Aorta (tissue), 5 donors: ENCODE measurements at regions of chr6 and their contacts with region 1.

Region 1: DNA sequence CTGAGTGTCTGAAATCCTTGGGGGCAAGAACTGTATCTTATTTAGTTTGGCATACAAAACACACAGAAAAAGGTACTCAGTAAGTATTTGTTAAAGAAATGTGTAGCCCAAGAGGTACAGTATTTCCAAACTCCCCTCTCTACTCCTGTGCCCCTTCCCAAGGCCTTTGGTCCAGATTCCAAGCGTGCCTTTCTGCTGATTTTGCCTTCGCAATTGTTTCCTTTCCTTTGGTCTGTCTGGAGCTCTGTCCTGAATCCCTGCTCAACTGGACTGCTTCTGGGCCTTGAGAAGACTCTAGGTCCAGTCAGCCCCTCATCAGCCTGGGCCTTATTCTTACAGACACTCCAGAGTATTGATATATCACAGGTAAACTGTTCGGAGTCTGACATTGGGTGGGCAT is 122.2 kb upstream of the SYNCRIP start:
- DNase-seq: no peak
- ATAC-seq: peak; percentile 59
- H3K4me3 ChIP-seq: no peak overlapping the region
- H3K27ac ChIP-seq: peak overlapping the region; percentile 86 to 89
- H3K4me1 ChIP-seq: peaks cover 0 to 3% of the 10 kb centered on the region in 2 donors
- H3K27me3 ChIP-seq: no peaks in the 10 kb centered on the region

Region 2: GRCh38 chr6:85690071-85690470 is 74.8 kb before region 1 on chr6:
- intact Hi-C with region 1: no loop called
- DNase-seq: no peak
- ATAC-seq: no peak
- H3K4me3 ChIP-seq: no peak overlapping the region
- H3K27ac ChIP-seq: no peak overlapping the region
- H3K4me1 ChIP-seq: no peaks in the 10 kb centered on the region
- H3K27me3 ChIP-seq: no peaks in the 10 kb centered on the region

Region 3: DNA sequence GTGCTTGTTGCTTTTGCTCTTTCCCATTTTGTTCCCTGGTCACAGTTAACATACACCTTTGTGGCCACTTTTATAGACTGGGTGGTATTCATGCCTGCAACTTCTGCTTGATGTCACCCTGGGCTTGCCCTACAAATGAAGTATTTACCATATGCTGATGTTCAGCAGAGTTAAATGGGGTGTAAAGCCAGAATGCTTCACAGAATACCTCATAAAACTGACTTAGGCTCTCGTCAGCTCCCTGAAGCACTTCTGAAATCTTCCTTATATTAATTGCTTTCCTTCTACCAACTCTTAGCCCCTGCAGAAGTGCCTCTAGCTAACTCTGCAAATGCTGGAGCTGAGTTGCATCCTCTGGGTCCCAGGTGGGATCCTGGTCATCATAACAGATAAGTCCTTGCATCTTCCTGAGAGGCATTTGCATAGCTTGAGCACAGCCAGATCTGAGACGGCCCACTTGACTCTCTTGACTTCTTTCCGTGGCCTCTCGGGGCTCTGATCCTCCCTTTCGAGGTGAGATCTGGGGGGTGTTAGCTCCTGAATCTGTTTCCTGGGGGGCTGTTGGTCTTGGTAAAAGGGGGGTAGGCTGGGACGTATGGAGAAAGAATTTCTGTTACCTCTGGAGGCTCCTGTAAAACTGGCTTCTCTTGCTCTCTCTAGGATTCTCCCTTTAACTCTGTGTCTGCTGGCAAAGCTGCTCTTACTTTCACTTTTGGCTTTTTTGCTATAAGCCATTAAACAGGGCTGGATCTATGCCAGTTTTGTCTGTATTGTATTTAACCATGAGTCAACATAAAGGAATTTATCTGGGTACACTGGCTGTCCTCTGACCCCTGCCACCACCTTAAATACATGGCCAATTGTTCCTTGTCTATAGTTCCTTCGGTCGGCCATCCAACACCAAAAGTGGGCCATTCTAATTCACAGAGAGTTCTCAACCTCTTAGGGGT is 100.9 kb after region 1 on chr6:
- intact Hi-C with region 1: loop called in 1 of 2 experiments (anchors 10 kb)
- DNase-seq: no peak
- ATAC-seq: peak; percentile 50
- H3K4me3 ChIP-seq: peak overlapping the region; percentile 8 to 20
- H3K27ac ChIP-seq: peak overlapping the region; percentile 69 to 85
- H3K4me1 ChIP-seq: peaks cover 0 to 4% of the 10 kb centered on the region in 2 donors
- H3K27me3 ChIP-seq: no peaks in the 10 kb centered on the region